ENCODE measurements at regions of chr2 and their contacts with region 1.

Region 1: DNA sequence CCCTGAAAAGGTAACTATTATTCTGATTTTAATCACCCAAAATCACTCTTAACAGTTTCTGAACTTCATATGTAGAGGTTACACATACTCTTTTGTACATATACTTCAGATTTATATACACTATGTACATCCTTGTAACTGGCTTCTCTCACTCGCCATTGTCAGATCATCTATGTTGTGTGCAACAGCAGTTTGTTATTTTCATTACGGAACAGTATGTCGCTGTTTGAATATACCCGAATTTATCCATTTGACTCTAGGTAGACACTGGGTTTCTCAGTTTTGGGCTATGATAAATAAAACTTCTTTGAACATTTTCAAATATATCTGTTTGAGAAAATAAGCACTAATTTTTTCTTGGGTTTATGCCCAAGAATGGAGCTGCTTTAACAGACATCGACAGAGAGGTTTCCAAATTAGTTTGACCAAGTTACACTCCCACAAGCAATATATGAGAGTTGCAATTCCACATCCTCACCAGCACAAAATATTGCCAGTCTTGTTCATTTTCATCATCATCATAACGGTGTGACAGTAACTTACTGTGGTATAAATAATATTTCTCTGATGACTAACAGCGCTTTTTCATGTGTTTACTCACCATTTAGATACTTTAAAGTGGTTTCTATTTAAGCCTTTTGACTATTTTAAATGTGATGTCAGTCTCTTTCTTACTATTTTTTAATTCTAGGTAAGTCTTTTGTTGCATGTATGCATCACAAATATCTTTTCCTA is 80.9 kb downstream of the SMC6 start:
- DNase-seq: no peak

Region 2: DNA sequence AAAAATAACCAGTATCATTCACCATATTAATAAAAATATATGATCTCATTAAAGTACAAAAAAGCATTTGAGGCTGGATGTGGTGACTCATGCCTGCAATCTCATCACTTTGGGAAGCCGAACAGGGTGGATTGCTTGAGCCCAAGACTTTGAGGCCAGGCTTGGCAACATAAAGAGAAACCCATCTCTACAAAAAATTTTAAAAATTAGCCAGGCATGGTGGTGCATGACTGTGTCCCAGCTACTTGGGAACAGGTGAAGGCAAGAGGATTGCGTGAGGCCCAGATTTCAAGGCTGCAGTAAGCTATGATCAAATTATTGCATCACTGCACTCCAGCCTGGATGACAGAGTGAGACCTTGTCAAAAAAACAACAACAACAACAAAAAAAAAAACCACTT is 230.4 kb before region 1 on chr2:
- CTCF ChIA-PET with region 1: no interaction called
- POLR2A ChIA-PET with region 1: no interaction called
- DNase-seq: no peak

Region 3: GRCh38 chr2:17646081-17646554 is 26.6 kb before region 1 on chr2:
- CTCF ChIA-PET with region 1: interaction called, 12 read pairs
- POLR2A ChIA-PET with region 1: no interaction called
- DNase-seq: peak; percentile 45

Region 4: DNA sequence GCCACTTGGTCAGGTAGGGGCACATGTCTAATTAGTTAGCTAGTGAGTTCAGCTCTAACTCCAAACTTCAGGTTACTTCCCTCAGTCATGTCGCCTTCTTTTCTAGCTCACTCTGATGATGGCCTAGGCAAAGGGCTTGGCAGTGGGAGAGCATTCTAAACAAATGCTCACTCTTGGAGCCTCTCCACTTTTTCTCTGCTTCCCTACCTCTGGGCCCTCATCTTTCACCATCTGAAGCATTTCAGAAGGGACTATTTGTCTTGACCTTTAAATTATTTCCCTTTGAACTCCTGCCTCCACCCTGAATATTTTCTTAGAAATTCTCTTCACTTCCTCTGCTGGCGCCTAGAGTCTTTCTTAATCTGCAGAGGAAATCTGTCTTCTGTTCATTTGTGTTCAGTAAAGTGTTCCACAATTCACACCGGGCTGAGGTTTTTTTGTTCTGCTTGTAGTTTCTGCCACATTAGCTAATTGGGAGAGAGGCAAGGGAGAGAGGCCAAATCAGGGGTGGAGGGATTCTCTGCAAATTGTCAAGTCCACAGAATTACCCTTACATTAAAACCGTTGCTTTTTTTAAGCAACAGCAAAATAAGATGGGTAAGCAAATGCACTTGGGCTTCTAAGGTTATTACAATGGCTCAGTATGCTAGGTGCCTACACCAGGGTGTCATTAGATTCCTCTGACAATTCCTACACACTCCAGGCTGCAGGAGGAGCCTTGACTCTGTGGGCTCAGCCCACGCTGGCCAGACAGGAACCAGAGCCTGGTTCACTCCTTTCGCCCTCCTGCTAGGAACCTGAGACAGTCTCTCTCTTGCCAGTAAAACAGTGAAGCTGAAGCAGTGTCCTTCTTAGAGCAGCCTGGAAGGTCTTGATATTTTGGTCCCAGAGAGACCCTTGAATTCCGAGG is 149.0 kb after region 1 on chr2:
- CTCF ChIA-PET with region 1: no interaction called
- POLR2A ChIA-PET with region 1: no interaction called
- DNase-seq: no peak